Activated T-helper 2 cell treated with anti-CD3 and anti-CD28 coated beads, Interferon-gamma antibody, Interleukin-2, Interleukin-4, amounts not matched to agents 10 μg/mL and 5 μg/mL and 100 μg/mL, durations not matched to agents 14 hours and 24 hours and 36 hours (primary cell): ENCODE measurements at regions of chr7 and their contacts with region 1.

Region 1: DNA sequence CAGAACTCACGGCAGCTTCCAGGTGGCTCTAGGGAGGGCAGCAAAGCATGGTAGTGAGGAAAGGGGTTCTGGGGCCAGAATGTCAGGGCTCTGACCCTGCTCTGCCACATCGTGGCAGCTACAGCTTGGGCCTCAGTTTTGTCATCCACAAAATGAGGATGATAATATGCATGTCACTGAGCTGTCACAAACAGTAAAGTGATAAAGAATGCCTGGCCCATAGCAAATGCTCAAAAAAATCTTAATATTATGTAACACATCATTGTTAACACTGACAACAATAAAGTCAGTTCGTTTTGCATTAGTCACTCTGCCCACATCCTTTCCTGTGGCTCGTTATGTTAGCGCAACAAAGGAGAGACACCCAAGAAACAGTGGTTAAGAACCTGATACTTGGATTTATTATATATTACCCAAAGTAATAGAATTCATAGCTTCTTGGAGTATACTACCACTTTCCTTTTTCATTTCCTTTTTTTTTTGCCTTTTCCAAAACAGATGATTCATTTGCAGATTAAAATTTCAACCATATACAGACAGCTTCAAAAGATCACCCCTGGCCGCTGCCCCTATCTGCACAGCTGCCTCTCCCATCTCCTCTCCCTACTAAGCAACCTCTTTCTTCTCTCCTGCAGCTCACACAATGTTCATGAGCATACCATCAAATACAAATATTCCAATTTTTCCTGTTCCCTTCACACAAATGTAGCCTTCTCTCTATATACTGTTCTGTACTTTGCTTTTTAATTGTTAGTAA is 45.5 kb upstream of the DDC start:
- DNase-seq: peak; percentile 47
- H3K4me3 Mint-ChIP-seq: no peak overlapping the region
- H3K27ac Mint-ChIP-seq: no peak overlapping the region
- H3K4me1 Mint-ChIP-seq: peaks cover 45% of the 10 kb centered on the region
- H3K27me3 Mint-ChIP-seq: no peaks in the 10 kb centered on the region

Region 2: GRCh38 chr7:49791088-49791741 is 819.5 kb before region 1 on chr7:
- intact Hi-C with region 1: no loop called
- DNase-seq: no peak
- H3K4me3 Mint-ChIP-seq: no peak overlapping the region
- H3K27ac Mint-ChIP-seq: no peak overlapping the region
- H3K4me1 Mint-ChIP-seq: no peaks in the 10 kb centered on the region
- H3K27me3 Mint-ChIP-seq: peaks cover 1% of the 10 kb centered on the region

Region 3: GRCh38 chr7:50564640-50565558 is 45.8 kb before region 1 on chr7 and contains the start of gene DDC:
- intact Hi-C with region 1: no loop called
- DNase-seq: no peak
- H3K4me3 Mint-ChIP-seq: no peak within 1 kb of the TSS
- H3K27ac Mint-ChIP-seq: no peak within 1 kb of the TSS
- H3K4me1 Mint-ChIP-seq: no peaks in the 10 kb centered on the region
- H3K27me3 Mint-ChIP-seq: peaks cover 11% of the 10 kb centered on the region
- total RNA-seq, gene DDC: 0.32 TPM in 1 of 2 replicates, not detected in the other

Region 4: GRCh38 chr7:50595491-50596102 is 15.1 kb before region 1 on chr7:
- intact Hi-C with region 1: loop called (anchors 2 kb)
- DNase-seq: no peak
- H3K4me3 Mint-ChIP-seq: no peak overlapping the region
- H3K27ac Mint-ChIP-seq: peak overlapping the region; percentile 75
- H3K4me1 Mint-ChIP-seq: peaks cover 58% of the 10 kb centered on the region
- H3K27me3 Mint-ChIP-seq: no peaks in the 10 kb centered on the region

Region 5: GRCh38 chr7:50632561-50633413 is 22.1 kb after region 1 on chr7:
- intact Hi-C with region 1: loop called (anchors 2 kb)
- DNase-seq: peak; percentile 37
- H3K4me3 Mint-ChIP-seq: no peak overlapping the region
- H3K27ac Mint-ChIP-seq: no peak overlapping the region
- H3K4me1 Mint-ChIP-seq: peaks cover 7% of the 10 kb centered on the region
- H3K27me3 Mint-ChIP-seq: peaks cover 17% of the 10 kb centered on the region

Region 6: DNA sequence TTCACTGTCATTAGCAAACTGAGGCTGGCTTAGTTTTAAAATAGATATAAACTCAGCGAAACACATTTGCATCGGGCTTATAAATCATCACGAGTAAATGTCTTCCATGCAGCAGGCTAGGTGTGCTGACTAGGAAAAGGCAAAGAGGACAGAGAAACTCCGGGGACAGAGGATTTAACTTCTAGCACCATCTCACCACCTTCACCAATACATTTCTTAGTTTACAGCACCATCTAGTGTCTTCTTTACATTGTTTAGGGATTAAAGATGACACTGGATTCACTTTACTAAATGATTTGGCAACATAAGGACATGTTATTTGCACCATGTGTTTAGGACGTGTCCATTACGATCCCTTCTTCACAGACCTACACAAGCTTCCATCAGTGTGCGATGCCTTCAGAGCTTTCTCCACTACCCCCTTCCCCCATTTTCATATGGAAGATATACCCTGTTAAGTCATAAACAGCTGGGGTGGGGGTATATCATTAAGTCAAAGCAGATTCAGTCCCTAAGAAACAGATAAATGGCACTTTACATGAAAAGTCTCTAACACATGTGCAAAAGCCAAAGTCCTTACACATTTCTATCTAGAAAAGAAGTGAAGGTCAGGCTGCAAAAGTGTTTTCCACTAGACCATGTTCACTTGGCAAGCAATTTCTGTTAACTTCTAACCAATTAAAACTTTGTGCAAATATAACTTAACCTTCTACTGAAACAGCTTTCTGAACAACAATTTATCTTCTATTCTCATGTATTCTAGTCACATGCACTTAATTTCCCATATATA is 68.7 kb after region 1 on chr7:
- intact Hi-C with region 1: loop called (anchors 1 kb)
- DNase-seq: no peak
- H3K4me3 Mint-ChIP-seq: no peak overlapping the region
- H3K27ac Mint-ChIP-seq: no peak overlapping the region
- H3K4me1 Mint-ChIP-seq: peaks cover 4% of the 10 kb centered on the region
- H3K27me3 Mint-ChIP-seq: peaks cover 11% of the 10 kb centered on the region

Region 7: DNA sequence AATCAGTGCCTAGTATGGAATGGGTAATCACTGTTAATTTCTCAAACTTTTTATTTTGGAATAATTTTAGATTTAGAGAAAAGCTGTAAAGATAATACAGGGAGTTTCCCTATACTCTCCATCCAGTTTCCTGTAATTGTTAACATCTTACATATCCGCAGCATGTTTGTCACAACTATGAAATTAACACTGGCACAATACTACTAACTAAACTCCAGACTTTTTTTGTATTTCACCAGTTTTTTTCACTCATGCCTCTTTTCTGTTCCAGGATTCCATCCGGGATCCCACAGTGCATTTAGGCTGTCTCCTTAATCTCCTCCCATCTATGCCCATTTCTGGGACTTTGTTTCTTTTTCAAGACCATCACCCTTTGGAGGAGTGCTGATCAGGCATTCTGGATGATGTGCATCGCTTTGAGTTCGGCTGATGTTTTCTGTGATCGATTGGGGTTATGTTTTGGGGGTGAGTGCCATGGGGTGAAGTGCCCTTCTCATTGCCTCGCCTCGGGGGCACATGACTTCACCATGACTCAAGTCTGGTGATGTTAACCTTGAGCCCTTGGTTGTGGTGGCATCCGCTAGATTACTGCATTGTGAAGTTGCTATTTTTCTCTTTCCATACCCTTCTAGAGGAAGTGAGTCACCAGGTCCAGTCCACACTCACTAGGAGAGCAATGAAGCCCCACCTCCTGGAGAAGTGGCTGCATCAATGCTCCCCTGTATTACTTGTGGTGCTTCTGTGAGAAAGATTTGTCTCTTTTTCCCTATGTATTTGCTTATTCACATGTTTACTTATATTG is 215.9 kb after region 1 on chr7:
- intact Hi-C with region 1: loop called (anchors 5 kb)
- DNase-seq: peak; percentile 40
- H3K4me3 Mint-ChIP-seq: no peak overlapping the region
- H3K27ac Mint-ChIP-seq: peak overlapping the region; percentile 71
- H3K4me1 Mint-ChIP-seq: peaks cover 27% of the 10 kb centered on the region
- H3K27me3 Mint-ChIP-seq: peaks cover 13% of the 10 kb centered on the region